CD4-positive, alpha-beta memory T cell (primary cell): ENCODE measurements at regions of chr9 and their contacts with region 1.

Region 1: GRCh38 chr9:136944519-136945279 is at the starts of genes C8G and FBXW5:
- DNase-seq: peak; percentile 89 to 97 (median 96)
- H3K4me3 ChIP-seq: peak within 1 kb of the TSS in 1 of 2 donors; percentile 70
- H3K4me3 Mint-ChIP-seq: peak within 1 kb of the TSS; percentile 75 to 88 (median 85)
- H3K27ac ChIP-seq: peak within 1 kb of the TSS; percentile 59
- H3K27ac Mint-ChIP-seq: peak within 1 kb of the TSS; percentile 66 to 90 (median 81)
- H3K4me1 ChIP-seq: peaks cover 23% of the 10 kb centered on the region
- H3K4me1 Mint-ChIP-seq: peaks cover 3 to 17% (median 9%) of the 10 kb centered on the region in 4 donors
- H3K27me3 ChIP-seq: no peaks in the 10 kb centered on the region
- H3K27me3 Mint-ChIP-seq: no peaks in the 10 kb centered on the region
- total RNA-seq, gene C8G: 2.2 TPM
- total RNA-seq, gene FBXW5: 122 to 123 TPM

Region 2: GRCh38 chr9:136631038-136632000 is 313.4 kb before region 1 on chr9:
- CTCF ChIA-PET with region 1: no interaction called
- POLR2A ChIA-PET with region 1: no interaction called
- intact Hi-C with region 1: no loop called
- DNase-seq: peak; percentile 79 to 84 (median 81)
- H3K4me3 ChIP-seq: no peak overlapping the region
- H3K4me3 Mint-ChIP-seq: no peak overlapping the region
- H3K27ac ChIP-seq: no peak overlapping the region
- H3K27ac Mint-ChIP-seq: no peak overlapping the region
- H3K4me1 ChIP-seq: peaks cover 6% of the 10 kb centered on the region
- H3K4me1 Mint-ChIP-seq: peaks cover 0 to 3% (median 1%) of the 10 kb centered on the region in 4 donors
- H3K27me3 ChIP-seq: no peaks in the 10 kb centered on the region
- H3K27me3 Mint-ChIP-seq: peaks cover 0 to 3% of the 10 kb centered on the region in 2 donors

Region 3: DNA sequence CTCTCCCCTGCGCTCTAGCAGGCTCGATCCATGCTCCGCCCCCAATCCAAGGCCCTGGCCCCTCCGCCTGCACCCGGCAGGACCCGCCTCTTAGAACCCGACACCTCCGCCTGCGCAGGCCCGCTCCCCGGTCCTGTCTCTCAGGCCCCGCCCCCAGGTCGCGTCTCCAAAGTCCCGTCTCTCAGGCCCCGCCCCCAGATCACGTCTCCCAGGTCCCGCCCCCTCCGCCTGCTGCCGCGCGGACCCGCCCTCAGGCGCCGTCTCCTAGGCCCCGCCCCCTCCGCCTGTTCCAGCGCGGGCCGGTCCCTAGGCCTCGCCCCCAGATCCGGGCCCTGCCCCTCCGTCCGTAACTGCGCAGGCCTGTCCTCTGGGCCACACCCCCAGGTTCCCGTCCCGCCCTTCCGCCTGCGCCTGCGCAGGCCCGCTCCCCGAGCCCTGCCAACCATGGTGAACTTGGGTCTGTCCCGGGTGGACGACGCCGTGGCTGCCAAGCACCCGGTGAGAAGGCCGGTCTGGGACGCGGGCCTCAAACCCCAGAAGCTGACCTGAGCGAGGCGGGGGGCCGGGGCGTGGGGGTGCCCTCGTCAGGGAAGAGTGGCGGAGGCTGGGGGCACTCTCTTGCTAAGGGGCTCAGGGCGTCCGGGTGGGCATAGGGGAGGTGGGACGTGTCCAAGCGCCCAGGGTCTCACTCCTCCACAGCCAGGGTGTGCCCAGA is 153.6 kb before region 1 on chr9 and contains the start of gene TMEM141:
- CTCF ChIA-PET with region 1: interaction called, 5 read pairs
- POLR2A ChIA-PET with region 1: interaction called, 7 read pairs
- intact Hi-C with region 1: loop called (anchors 1 kb)
- DNase-seq: peak; percentile 99 to 100 (median 99)
- H3K4me3 ChIP-seq: peak within 1 kb of the TSS; percentile 61 to 86
- H3K4me3 Mint-ChIP-seq: peak within 1 kb of the TSS; percentile 81 to 88 (median 85)
- H3K27ac ChIP-seq: peak within 1 kb of the TSS; percentile 93
- H3K27ac Mint-ChIP-seq: peak within 1 kb of the TSS; percentile 91 to 98 (median 95)
- H3K4me1 ChIP-seq: peaks cover 31% of the 10 kb centered on the region
- H3K4me1 Mint-ChIP-seq: peaks cover 8 to 42% (median 24%) of the 10 kb centered on the region in 4 donors
- H3K27me3 ChIP-seq: no peaks in the 10 kb centered on the region
- H3K27me3 Mint-ChIP-seq: no peaks in the 10 kb centered on the region
- total RNA-seq, gene TMEM141: 51.1 to 53.4 TPM

Region 4: GRCh38 chr9:136849038-136849959 is 95.4 kb before region 1 on chr9 and contains the start of gene PHPT1:
- CTCF ChIA-PET with region 1: no interaction called
- POLR2A ChIA-PET with region 1: interaction called, 6 read pairs
- intact Hi-C with region 1: loop called (anchors 1 kb)
- DNase-seq: peak; percentile 96 to 99 (median 97)
- H3K4me3 ChIP-seq: peak within 1 kb of the TSS; percentile 54 to 85
- H3K4me3 Mint-ChIP-seq: peak within 1 kb of the TSS; percentile 89 to 94 (median 92)
- H3K27ac ChIP-seq: peak within 1 kb of the TSS; percentile 47
- H3K27ac Mint-ChIP-seq: peak within 1 kb of the TSS; percentile 77 to 96 (median 93)
- H3K4me1 ChIP-seq: peaks cover 26% of the 10 kb centered on the region
- H3K4me1 Mint-ChIP-seq: peaks cover 7 to 27% (median 12%) of the 10 kb centered on the region in 4 donors
- H3K27me3 ChIP-seq: no peaks in the 10 kb centered on the region
- H3K27me3 Mint-ChIP-seq: peaks cover 3 to 10% of the 10 kb centered on the region in 2 donors
- total RNA-seq, gene PHPT1: 41.3 to 42.6 TPM

Region 5: GRCh38 chr9:136885950-136886578 is 58.6 kb before region 1 on chr9 and contains the start of gene TRAF2:
- CTCF ChIA-PET with region 1: interaction called, 3 read pairs
- POLR2A ChIA-PET with region 1: interaction called, 18 read pairs
- intact Hi-C with region 1: loop called (anchors 1 kb)
- DNase-seq: peak; percentile 97
- H3K4me3 ChIP-seq: peak within 1 kb of the TSS; percentile 36 to 82
- H3K4me3 Mint-ChIP-seq: peak within 1 kb of the TSS; percentile 84 to 92 (median 88)
- H3K27ac ChIP-seq: peak within 1 kb of the TSS; percentile 98
- H3K27ac Mint-ChIP-seq: peak within 1 kb of the TSS; percentile 92 to 97 (median 94)
- H3K4me1 ChIP-seq: peaks cover 54% of the 10 kb centered on the region
- H3K4me1 Mint-ChIP-seq: peaks cover 16 to 57% (median 32%) of the 10 kb centered on the region in 4 donors
- H3K27me3 ChIP-seq: no peaks in the 10 kb centered on the region
- H3K27me3 Mint-ChIP-seq: no peaks in the 10 kb centered on the region
- total RNA-seq, gene TRAF2: 40.2 to 43.2 TPM

Region 6: GRCh38 chr9:136965771-136966484 is 21.2 kb after region 1 on chr9:
- CTCF ChIA-PET with region 1: interaction called, 6 read pairs
- POLR2A ChIA-PET with region 1: interaction called, 17 read pairs
- intact Hi-C with region 1: no loop called
- DNase-seq: peak; percentile 41 to 71 (median 48)
- H3K4me3 ChIP-seq: no peak overlapping the region
- H3K4me3 Mint-ChIP-seq: peak overlapping the region; percentile 70 to 86 (median 79)
- H3K27ac ChIP-seq: peak overlapping the region; percentile 42
- H3K27ac Mint-ChIP-seq: peak overlapping the region; percentile 77 to 91 (median 88)
- H3K4me1 ChIP-seq: peaks cover 47% of the 10 kb centered on the region
- H3K4me1 Mint-ChIP-seq: peaks cover 19 to 38% (median 30%) of the 10 kb centered on the region in 4 donors
- H3K27me3 ChIP-seq: no peaks in the 10 kb centered on the region
- H3K27me3 Mint-ChIP-seq: no peaks in the 10 kb centered on the region

Region 7: DNA sequence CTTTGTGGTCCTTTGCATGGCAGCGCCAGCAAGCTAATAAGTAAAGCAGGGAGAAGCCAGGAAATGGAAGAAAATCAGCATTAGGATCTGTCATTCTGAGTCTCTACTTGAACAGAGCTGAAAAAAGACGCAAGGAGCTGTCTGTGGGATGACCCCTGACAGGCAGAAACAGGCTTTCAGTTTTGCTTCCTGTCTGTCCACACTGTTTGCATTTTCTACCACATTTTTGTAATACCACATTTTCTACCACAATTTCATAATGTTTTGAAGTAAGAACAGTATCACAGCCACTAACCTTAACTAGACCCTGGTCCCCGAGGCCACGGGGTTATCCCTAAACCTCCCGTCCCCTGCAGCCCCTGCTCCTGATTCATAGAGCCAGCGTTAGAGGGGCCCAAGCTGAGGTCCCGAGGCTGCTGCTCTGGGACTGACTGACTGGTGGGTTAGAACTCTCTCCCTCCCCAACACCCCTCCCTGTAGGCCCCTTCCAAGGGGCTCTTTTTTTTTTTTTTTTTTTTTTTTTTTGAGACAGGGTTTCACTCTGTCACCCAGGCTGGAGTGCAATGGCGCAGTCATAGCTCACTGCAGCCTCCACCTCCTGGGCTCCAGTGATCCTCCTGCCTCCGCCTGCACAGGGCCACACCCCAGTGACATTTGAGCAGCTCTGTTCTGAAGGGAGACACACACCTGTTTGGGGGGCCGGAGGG is 55.6 kb after region 1 on chr9:
- CTCF ChIA-PET with region 1: interaction called, 13 read pairs
- POLR2A ChIA-PET with region 1: interaction called, 32 read pairs
- intact Hi-C with region 1: no loop called
- DNase-seq: peak in 4 of 5 donors; percentile 40 to 53 (median 44)
- H3K4me3 ChIP-seq: no peak overlapping the region
- H3K4me3 Mint-ChIP-seq: peak overlapping the region in 7 of 8 donors; percentile 26 to 81 (median 60)
- H3K27ac ChIP-seq: no peak overlapping the region
- H3K27ac Mint-ChIP-seq: peak overlapping the region; percentile 65 to 92 (median 86)
- H3K4me1 ChIP-seq: peaks cover 45% of the 10 kb centered on the region
- H3K4me1 Mint-ChIP-seq: peaks cover 13 to 50% (median 25%) of the 10 kb centered on the region in 4 donors
- H3K27me3 ChIP-seq: no peaks in the 10 kb centered on the region
- H3K27me3 Mint-ChIP-seq: no peaks in the 10 kb centered on the region